ENCODE measurements at regions of chr14 and their contacts with region 1.

Region 1: DNA sequence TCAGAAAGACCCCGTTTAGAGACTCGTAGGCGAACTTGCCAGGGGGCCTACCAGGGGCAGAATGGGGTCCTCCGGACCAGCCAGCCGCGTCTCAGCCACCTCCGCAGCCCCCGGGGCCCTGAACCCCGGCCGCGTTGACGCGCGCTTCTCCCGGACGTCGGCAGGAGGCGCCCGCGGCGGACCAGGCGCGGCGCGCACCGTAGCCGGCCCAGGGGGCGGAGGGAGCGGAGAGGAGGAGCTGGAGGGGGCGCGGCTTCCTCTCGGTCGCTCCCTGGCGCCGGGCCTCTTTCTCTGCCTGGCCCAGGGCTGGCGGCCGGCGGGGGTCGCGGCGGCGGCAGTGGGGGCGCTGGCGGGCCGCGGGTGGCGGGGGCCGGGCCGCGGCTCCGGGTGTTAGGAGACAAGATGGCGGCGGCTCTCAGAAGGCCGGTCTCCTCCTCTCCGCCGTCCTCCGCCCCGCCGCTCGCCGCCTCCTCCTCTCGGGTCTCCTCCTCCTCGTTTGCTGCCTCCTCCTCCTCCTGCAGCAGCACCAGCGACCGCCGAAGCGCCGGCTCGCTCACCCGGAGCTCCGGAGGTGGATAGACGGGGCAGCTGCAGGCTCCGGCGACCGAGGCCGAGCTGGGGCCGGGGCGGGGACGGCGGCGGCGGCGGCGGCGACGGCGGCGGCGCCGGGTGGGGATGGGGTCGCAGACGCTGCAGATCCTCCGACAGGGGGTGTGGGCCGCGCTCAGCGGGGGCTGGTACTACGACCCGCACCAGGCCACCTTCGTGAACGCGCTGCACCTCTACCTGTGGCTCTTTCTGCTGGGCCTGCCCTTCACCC is at the start of gene PCNX1:
- DNase-seq: peak; percentile 91 to 95 (median 94)
- ATAC-seq: peak; percentile 87
- H3K4me3 ChIP-seq: peak within 1 kb of the TSS; percentile 93
- H3K4me3 Mint-ChIP-seq: peak within 1 kb of the TSS; percentile 87 to 99 (median 94)
- H3K27ac ChIP-seq: peak within 1 kb of the TSS; percentile 87
- H3K27ac Mint-ChIP-seq: peak within 1 kb of the TSS; percentile 93 to 99 (median 97)
- H3K4me1 ChIP-seq: peaks cover 9 to 34% of the 10 kb centered on the region in 2 donors
- H3K4me1 Mint-ChIP-seq: peaks cover 49 to 75% (median 70%) of the 10 kb centered on the region in 7 donors
- H3K27me3 ChIP-seq: no peaks in the 10 kb centered on the region
- H3K27me3 Mint-ChIP-seq: no peaks in the 10 kb centered on the region
- total RNA-seq, gene PCNX1: 80.8 to 114 (median 112) TPM

Region 2: GRCh38 chr14:70809543-70810244 is 97.7 kb before region 1 on chr14:
- CTCF ChIA-PET with region 1: interaction called, 9 read pairs
- POLR2A ChIA-PET with region 1: interaction called, 4 read pairs
- intact Hi-C with region 1: loop called (anchors 1 kb)
- DNase-seq: peak; percentile 68 to 87 (median 78)
- ATAC-seq: peak; percentile 90
- H3K4me3 ChIP-seq: peak overlapping the region; percentile 73
- H3K4me3 Mint-ChIP-seq: peak overlapping the region in 1 of 10 donors; percentile 87
- H3K27ac ChIP-seq: peak overlapping the region; percentile 65
- H3K27ac Mint-ChIP-seq: peak overlapping the region in 6 of 9 donors; percentile 79 to 92 (median 88)
- H3K4me1 ChIP-seq: peaks cover 3 to 10% of the 10 kb centered on the region in 2 donors
- H3K4me1 Mint-ChIP-seq: peaks cover 9 to 17% (median 13%) of the 10 kb centered on the region in 7 donors
- H3K27me3 ChIP-seq: no peaks in the 10 kb centered on the region
- H3K27me3 Mint-ChIP-seq: peaks cover 0 to 9% (median 4%) of the 10 kb centered on the region in 5 donors

Region 3: DNA sequence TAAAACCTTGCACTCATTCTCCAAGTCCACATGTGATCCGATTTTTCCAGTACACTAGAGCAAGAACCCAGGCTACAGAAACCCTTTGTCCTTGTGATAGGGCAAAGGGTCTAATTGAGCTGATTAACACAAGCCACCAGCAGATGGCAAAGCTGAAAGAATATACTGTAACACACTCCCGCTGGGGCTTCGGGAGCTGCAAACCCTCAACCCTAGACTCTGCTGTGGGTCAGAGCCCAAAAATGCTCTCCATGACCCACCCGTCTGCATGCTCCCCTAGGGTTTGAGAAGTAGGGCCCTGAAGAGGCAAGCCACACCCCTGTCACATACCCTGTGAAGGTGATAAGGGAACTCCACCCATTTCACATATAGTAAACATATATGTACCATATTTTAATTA is 33.8 kb before region 1 on chr14:
- CTCF ChIA-PET with region 1: interaction called, 13 read pairs
- POLR2A ChIA-PET with region 1: interaction called, 7 read pairs
- intact Hi-C with region 1: loop called (anchors 1 to 2 kb)
- DNase-seq: peak in 3 of 9 donors; percentile 19 to 30 (median 30)
- ATAC-seq: peak; percentile 74
- H3K4me3 ChIP-seq: no peak overlapping the region
- H3K4me3 Mint-ChIP-seq: peak overlapping the region in 3 of 10 donors; percentile 2 to 68 (median 33)
- H3K27ac ChIP-seq: no peak overlapping the region
- H3K27ac Mint-ChIP-seq: peak overlapping the region in 6 of 9 donors; percentile 4 to 97 (median 39)
- H3K4me1 ChIP-seq: peaks cover 11 to 16% of the 10 kb centered on the region in 2 donors
- H3K4me1 Mint-ChIP-seq: peaks cover 6 to 25% (median 15%) of the 10 kb centered on the region in 7 donors
- H3K27me3 ChIP-seq: no peaks in the 10 kb centered on the region
- H3K27me3 Mint-ChIP-seq: no peaks in the 10 kb centered on the region

Region 4: DNA sequence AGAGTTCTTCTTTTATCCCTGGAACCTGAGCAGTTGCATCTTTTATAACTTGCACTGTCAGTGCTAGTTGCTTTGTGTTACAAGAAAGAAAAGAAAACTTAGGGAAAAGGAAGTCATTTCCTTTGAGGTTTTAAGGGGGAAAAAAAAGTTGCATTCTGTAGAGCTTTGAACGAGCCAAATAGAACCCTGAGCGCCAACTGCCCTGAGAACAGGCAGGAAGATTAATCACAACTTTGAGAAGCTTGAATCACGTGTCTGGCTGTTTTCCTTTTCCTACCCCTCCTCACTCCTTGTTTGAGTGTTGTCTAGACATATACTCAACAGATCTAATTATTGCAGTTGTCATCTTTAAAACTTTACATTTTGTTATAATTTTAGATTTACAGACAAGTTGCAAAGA is 12.4 kb after region 1 on chr14:
- CTCF ChIA-PET with region 1: interaction called, 12 read pairs
- POLR2A ChIA-PET with region 1: interaction called, 23 read pairs
- intact Hi-C with region 1: loop called (anchors 1 kb)
- DNase-seq: peak in 1 of 9 donors; percentile 18
- ATAC-seq: peak; percentile 36
- H3K4me3 ChIP-seq: no peak overlapping the region
- H3K4me3 Mint-ChIP-seq: peak overlapping the region in 9 of 10 donors; percentile 43 to 80 (median 71)
- H3K27ac ChIP-seq: no peak overlapping the region
- H3K27ac Mint-ChIP-seq: peak overlapping the region; percentile 56 to 84 (median 77)
- H3K4me1 ChIP-seq: peaks cover 51 to 66% of the 10 kb centered on the region in 2 donors
- H3K4me1 Mint-ChIP-seq: peaks cover 55 to 99% (median 90%) of the 10 kb centered on the region in 7 donors
- H3K27me3 ChIP-seq: no peaks in the 10 kb centered on the region
- H3K27me3 Mint-ChIP-seq: no peaks in the 10 kb centered on the region

Region 5: GRCh38 chr14:70947711-70948110 is 40.3 kb after region 1 on chr14:
- CTCF ChIA-PET with region 1: interaction called, 114 read pairs
- POLR2A ChIA-PET with region 1: interaction called, 104 read pairs
- intact Hi-C with region 1: no loop called
- DNase-seq: no peak
- ATAC-seq: no peak
- H3K4me3 ChIP-seq: no peak overlapping the region
- H3K4me3 Mint-ChIP-seq: no peak overlapping the region
- H3K27ac ChIP-seq: no peak overlapping the region
- H3K27ac Mint-ChIP-seq: peak overlapping the region in 6 of 9 donors; percentile 10 to 58 (median 12)
- H3K4me1 ChIP-seq: peaks cover 2% of the 10 kb centered on the region in 2 donors
- H3K4me1 Mint-ChIP-seq: peaks cover 16 to 48% (median 44%) of the 10 kb centered on the region in 7 donors
- H3K27me3 ChIP-seq: no peaks in the 10 kb centered on the region
- H3K27me3 Mint-ChIP-seq: no peaks in the 10 kb centered on the region

Measured in naive thymus-derived CD4-positive, alpha-beta T cell (primary cell).